Calu3 (cell line): ENCODE measurements at regions of chr2 and their contacts with region 1.

Region 1: DNA sequence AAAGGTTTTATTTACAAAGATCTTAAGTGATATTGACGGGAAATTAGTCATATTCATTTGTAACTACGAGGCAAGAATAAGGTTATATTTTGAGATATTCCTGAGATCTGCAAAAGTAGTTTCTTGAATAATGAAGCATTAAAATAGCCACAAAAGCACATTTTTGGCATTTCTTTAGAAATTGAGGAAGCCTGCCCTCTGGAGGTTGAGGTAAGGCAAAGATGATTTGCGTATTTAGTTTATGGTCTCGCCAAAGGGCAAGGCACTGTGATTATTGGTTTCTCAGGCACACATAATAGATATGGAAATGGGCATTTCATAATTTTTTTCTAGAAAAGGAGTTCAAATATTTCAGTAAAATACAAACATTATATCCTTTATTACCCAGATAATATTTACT is 143.7 kb upstream of the RPRM start:
- DNase-seq: peak; percentile 5
- H3K4me3 Mint-ChIP-seq: no peak overlapping the region
- H3K27ac Mint-ChIP-seq: no peak overlapping the region
- H3K4me1 Mint-ChIP-seq: no peaks in the 10 kb centered on the region
- H3K27me3 Mint-ChIP-seq: no peaks in the 10 kb centered on the region
- CTCF ChIP-seq: no peak

Region 2: DNA sequence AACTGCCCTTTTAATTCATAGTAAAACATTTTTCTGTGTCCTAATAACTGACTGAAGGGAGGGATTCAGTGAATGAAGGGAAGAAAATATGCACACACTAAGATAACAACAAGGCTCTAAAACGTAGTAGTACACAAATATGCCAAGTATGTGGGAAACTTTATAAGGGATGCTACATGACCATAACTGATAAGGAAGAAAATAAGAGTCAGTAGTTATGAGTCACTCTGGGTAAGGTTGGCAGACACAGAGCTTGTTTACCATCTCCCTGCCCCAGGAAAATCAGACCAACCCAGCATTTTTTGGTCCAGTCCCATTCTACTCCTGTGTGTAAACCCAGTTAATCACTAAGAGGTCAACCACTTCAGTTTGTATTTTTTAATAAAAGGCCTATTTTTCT is 267.9 kb before region 1 on chr2:
- CTCF ChIA-PET with region 1: no interaction called
- intact Hi-C with region 1: loop called (anchors 10 kb)
- DNase-seq: no peak
- H3K4me3 Mint-ChIP-seq: no peak overlapping the region
- H3K27ac Mint-ChIP-seq: no peak overlapping the region
- H3K4me1 Mint-ChIP-seq: peaks cover 10% of the 10 kb centered on the region
- H3K27me3 Mint-ChIP-seq: no peaks in the 10 kb centered on the region
- CTCF ChIP-seq: no peak